ENCODE measurements at regions of chr22 and their contacts with region 1.

Region 1: GRCh38 chr22:49930739-49931412 is 12.4 kb downstream of the CRELD2 start:
- DNase-seq: peak; percentile 53
- ATAC-seq: peak; percentile 46
- H3K4me3 Mint-ChIP-seq: peak overlapping the region; percentile 55
- H3K27ac Mint-ChIP-seq: peak overlapping the region; percentile 79
- H3K4me1 Mint-ChIP-seq: peaks cover 56% of the 10 kb centered on the region
- H3K27me3 Mint-ChIP-seq: no peaks in the 10 kb centered on the region
- CTCF ChIP-seq: peak; percentile 21

Region 2: GRCh38 chr22:49642331-49642730 is 288.5 kb before region 1 on chr22:
- CTCF ChIA-PET with region 1: no interaction called
- POLR2A ChIA-PET with region 1: no interaction called
- intact Hi-C with region 1: no loop called
- DNase-seq: no peak
- ATAC-seq: no peak
- H3K4me3 Mint-ChIP-seq: no peak overlapping the region
- H3K27ac Mint-ChIP-seq: no peak overlapping the region
- H3K4me1 Mint-ChIP-seq: peaks cover 2% of the 10 kb centered on the region
- H3K27me3 Mint-ChIP-seq: no peaks in the 10 kb centered on the region
- CTCF ChIP-seq: no peak

Region 3: DNA sequence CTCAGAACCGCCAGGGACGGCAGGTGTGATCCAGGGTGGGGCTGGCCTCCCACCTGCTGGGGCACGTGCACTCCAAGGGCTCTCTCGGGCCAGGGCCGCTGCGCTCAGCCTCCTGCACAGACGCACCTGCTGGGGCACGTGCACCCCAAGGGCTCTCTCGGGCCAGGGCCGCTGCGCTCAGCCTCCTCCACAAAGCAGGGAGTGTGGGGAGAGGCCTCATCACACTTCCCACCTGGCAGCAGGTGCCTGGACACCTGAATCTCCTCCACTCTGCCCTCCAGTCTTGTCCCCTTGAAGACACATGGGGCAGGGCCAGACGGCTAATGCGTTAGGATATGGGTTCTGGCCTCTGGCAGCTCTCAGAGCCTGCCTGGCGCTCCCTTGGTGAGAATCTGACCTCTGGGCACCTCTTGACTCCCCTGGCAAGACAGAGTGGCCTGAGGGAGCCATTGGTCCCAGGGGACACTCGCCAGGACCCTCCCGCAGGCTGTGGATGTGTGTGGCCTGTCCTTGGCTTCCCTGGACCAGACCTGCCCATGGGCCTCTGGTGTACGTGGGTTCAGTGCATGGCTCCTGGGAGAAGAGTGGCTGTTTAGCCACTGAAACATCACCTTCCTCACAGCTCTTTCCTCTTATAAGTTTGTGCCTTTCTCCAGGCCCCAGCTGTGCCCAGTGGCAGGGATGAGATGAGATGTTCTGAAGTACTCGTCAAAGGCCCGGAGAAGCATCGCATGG is 176.7 kb before region 1 on chr22:
- CTCF ChIA-PET with region 1: no interaction called
- POLR2A ChIA-PET with region 1: no interaction called
- intact Hi-C with region 1: no loop called
- DNase-seq: no peak
- ATAC-seq: no peak
- H3K4me3 Mint-ChIP-seq: no peak overlapping the region
- H3K27ac Mint-ChIP-seq: no peak overlapping the region
- H3K4me1 Mint-ChIP-seq: no peaks in the 10 kb centered on the region
- H3K27me3 Mint-ChIP-seq: peaks cover 13% of the 10 kb centered on the region
- CTCF ChIP-seq: no peak

Region 4: GRCh38 chr22:49767355-49768062 is 163.4 kb before region 1 on chr22:
- CTCF ChIA-PET with region 1: interaction called, 13 read pairs
- POLR2A ChIA-PET with region 1: interaction called, 7 read pairs
- intact Hi-C with region 1: loop called (anchors 1 kb)
- DNase-seq: peak; percentile 15
- ATAC-seq: peak; percentile 68
- H3K4me3 Mint-ChIP-seq: no peak overlapping the region
- H3K27ac Mint-ChIP-seq: no peak overlapping the region
- H3K4me1 Mint-ChIP-seq: peaks cover 9% of the 10 kb centered on the region
- H3K27me3 Mint-ChIP-seq: no peaks in the 10 kb centered on the region
- CTCF ChIP-seq: no peak

Region 5: GRCh38 chr22:49979587-49980264 is 48.9 kb after region 1 on chr22:
- CTCF ChIA-PET with region 1: interaction called, 10 read pairs
- POLR2A ChIA-PET with region 1: interaction called, 25 read pairs
- intact Hi-C with region 1: loop called (anchors 2 kb)
- DNase-seq: no peak
- ATAC-seq: no peak
- H3K4me3 Mint-ChIP-seq: no peak overlapping the region
- H3K27ac Mint-ChIP-seq: peak overlapping the region; percentile 14
- H3K4me1 Mint-ChIP-seq: peaks cover 33% of the 10 kb centered on the region
- H3K27me3 Mint-ChIP-seq: peaks cover 2% of the 10 kb centered on the region
- CTCF ChIP-seq: no peak

Region 6: DNA sequence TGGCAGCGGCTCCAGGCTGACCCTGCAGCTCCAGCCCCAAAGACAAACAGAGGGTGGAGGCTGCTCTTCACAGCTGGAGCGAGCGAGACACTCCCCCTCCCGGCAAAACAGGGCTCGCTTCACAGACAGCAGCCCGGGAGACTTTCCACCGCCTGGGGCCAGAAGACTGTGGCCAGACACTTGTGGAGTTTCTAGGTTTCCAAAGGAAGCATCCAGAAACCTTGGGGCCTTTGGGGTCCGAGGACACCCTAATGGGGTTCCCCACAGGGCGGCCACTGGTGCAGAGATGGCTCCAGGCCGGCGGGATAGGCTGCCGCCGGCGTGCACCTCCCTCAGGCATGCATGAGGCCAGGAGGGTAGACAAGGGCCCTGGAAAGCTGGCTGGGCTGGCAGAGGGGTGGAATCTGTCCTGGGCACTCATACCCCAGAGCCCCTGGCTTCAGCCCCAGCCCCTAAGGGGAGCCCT is 81.9 kb after region 1 on chr22 and contains the start of gene IL17REL:
- CTCF ChIA-PET with region 1: interaction called, 5 read pairs
- POLR2A ChIA-PET with region 1: interaction called, 18 read pairs
- intact Hi-C with region 1: loop called (anchors 5 kb)
- DNase-seq: no peak
- ATAC-seq: no peak
- H3K4me3 Mint-ChIP-seq: peak within 1 kb of the TSS; percentile 71
- H3K27ac Mint-ChIP-seq: peak within 1 kb of the TSS; percentile 68
- H3K4me1 Mint-ChIP-seq: peaks cover 49% of the 10 kb centered on the region
- H3K27me3 Mint-ChIP-seq: no peaks in the 10 kb centered on the region
- CTCF ChIP-seq: no peak
- total RNA-seq, gene IL17REL: 0.15 and 0.31 TPM in 2 replicates

Region 7: DNA sequence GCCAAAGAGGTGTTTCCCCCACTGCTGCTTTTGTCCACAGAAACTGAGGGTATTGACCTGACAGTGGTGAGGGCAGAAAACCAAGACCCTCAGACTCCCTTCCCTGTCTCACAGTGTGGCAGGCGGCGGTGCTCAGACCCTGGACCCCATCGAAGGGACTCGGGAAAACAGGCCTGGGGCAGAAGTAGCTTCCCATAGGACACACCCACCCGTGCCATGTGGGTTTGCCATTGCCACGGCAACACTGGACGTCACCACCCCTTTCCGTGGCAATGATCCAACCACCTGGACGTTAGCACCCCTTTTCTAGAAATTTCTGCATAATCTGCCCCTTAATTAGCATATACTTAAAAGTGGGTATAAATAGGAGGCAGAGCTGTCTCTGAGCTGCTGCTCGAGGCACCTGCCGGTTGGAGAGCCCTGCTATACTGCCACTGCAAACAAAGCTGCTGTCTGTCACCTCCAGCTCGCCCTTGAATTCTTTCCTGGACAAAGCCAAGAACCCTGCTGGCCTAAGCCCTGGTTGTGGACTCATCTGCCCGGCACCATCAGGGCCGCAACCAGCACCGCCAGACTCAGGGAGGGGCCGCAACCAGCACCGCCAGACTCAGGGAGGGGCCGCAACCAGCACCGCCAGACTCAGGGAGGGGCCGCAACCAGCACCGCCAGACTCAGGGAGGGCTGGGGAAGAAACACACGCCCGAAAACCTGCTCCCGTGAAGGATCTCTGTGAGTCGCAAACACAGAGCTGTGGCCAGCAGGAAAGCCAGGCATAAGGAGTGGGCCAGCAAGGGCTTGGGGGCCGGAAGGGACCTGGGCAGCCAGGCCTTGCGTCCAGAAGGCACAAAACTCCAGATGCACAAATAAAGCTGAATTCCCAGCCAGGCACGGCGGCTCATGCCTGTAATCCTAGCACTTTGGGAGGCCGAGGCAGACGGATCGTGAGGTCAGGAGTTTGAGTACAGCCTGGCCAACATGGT is 144.0 kb after region 1 on chr22:
- CTCF ChIA-PET with region 1: no interaction called
- POLR2A ChIA-PET with region 1: no interaction called
- intact Hi-C with region 1: no loop called
- DNase-seq: no peak
- ATAC-seq: no peak
- H3K4me3 Mint-ChIP-seq: no peak overlapping the region
- H3K27ac Mint-ChIP-seq: no peak overlapping the region
- H3K4me1 Mint-ChIP-seq: no peaks in the 10 kb centered on the region
- H3K27me3 Mint-ChIP-seq: no peaks in the 10 kb centered on the region
- CTCF ChIP-seq: no peak

Region 8: GRCh38 chr22:50148991-50149721 is 218.3 kb after region 1 on chr22:
- CTCF ChIA-PET with region 1: interaction called, 4 read pairs
- POLR2A ChIA-PET with region 1: no interaction called
- intact Hi-C with region 1: loop called (anchors 1 kb)
- DNase-seq: peak; percentile 67
- ATAC-seq: peak; percentile 98
- H3K4me3 Mint-ChIP-seq: no peak overlapping the region
- H3K27ac Mint-ChIP-seq: no peak overlapping the region
- H3K4me1 Mint-ChIP-seq: peaks cover 4% of the 10 kb centered on the region
- H3K27me3 Mint-ChIP-seq: no peaks in the 10 kb centered on the region
- CTCF ChIP-seq: peak; percentile 66

Region 9: DNA sequence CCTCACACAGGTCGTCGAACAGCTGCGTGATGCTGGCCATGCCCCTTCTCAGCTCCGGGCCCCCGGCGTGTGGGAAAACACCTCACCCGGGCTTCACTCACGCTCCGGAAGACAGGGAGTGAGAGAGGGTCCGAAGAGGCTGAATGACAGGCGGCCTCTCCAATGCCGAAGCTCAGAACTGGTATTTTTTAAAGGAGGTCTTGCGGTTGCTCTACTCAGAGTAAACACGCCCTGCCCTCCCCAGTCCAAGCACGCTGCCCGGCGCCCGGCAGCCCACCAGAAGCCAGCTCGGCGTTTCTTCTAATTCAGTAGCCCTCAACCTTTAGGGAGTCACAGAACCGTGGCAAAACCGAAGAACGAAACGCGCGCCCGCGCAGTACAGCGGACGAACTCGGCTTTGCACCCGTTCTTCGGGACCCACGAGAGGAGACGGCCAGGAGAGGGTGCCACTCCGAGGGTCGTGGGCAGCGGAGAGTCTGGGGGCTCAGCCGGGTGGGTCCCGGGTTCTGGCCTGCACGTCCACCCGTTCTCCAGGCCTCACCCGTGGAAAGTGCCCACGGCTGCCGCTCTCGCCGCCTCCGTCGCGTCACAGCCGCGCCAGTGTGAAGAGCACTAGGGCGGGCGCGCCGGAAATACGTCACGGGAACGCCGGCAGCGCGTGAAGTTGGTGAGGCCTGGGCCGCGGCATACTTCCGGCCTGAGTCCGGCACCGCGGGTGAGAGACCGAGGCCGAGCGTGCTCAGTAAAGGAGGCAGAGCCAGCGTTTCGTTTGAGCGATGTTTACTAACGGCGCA is 313.7 kb after region 1 on chr22 and contains the start of gene TUBGCP6:
- CTCF ChIA-PET with region 1: interaction called, 3 read pairs
- POLR2A ChIA-PET with region 1: interaction called, 4 read pairs
- intact Hi-C with region 1: loop called (anchors 2 kb)
- DNase-seq: peak; percentile 96
- ATAC-seq: peak; percentile 76
- H3K4me3 Mint-ChIP-seq: peak within 1 kb of the TSS; percentile 100
- H3K27ac Mint-ChIP-seq: peak within 1 kb of the TSS; percentile 100
- H3K4me1 Mint-ChIP-seq: peaks cover 52% of the 10 kb centered on the region
- H3K27me3 Mint-ChIP-seq: no peaks in the 10 kb centered on the region
- CTCF ChIP-seq: no peak
- total RNA-seq, gene TUBGCP6: 87.5 and 103 TPM in 2 replicates